ENCODE measurements at regions of chr10 and their contacts with region 1.

Region 1: DNA sequence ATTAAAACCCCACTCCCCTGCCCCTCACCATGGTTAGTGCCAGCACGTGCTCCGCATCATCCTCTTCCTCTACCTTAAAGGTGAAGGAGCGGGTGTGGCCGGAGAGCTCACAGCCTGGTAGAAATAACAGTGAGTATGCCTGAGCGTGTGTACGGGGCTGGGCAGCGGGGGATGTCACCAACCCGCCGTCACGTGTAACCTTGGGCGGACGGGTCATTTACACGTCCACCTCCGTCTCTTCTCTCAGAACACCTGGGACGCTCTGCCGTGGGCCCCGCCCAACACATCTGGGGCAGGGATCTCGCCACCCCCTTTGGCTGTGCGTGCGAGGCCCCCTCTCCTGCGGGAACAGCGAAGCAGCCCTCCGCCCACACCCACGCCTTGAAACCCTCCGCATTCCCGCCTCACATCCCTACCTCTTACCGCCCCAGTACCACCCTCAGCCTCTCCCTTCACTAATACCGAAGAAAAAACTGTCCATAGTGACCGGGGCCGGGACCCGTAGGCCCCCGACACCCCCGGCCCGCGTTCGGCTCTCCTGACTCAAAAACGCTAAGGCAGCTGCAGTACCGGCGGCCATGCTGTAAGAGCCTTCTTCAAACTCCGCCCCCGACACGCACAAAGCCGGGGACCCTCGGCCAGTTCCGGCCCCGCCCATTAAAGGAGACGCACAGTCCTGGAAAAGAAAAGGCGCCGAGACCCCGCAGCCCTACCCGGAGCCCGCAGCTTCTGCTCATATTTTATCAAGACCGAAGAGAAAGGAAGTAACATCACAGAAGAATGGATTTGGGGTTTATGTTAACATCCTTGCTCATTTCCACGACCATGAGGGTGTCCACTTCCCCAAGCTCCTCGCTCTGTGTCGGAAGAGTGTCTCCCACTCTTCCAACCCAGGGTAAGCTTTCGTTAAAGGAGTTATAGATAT is at the start of gene NPM3:
- DNase-seq: peak; percentile 93
- ATAC-seq: peak; percentile 40
- H3K4me3 Mint-ChIP-seq: peak within 1 kb of the TSS; percentile 100
- H3K27ac Mint-ChIP-seq: peak within 1 kb of the TSS; percentile 92
- H3K4me1 Mint-ChIP-seq: peaks cover 47% of the 10 kb centered on the region
- H3K27me3 Mint-ChIP-seq: peaks cover 11% of the 10 kb centered on the region
- CTCF ChIP-seq: no peak
- total RNA-seq, gene NPM3: 223 to 260 TPM (median 229 TPM) in 3 replicates

Region 2: GRCh38 chr10:100670828-100671479 is 1112.1 kb before region 1 on chr10:
- CTCF ChIA-PET with region 1: no interaction called
- POLR2A ChIA-PET with region 1: no interaction called
- DNase-seq: peak; percentile 77
- ATAC-seq: peak; percentile 67
- H3K4me3 Mint-ChIP-seq: peak overlapping the region; percentile 61
- H3K27ac Mint-ChIP-seq: no peak overlapping the region
- H3K4me1 Mint-ChIP-seq: peaks cover 28% of the 10 kb centered on the region
- H3K27me3 Mint-ChIP-seq: peaks cover 60% of the 10 kb centered on the region
- CTCF ChIP-seq: peak; percentile 92

Region 3: DNA sequence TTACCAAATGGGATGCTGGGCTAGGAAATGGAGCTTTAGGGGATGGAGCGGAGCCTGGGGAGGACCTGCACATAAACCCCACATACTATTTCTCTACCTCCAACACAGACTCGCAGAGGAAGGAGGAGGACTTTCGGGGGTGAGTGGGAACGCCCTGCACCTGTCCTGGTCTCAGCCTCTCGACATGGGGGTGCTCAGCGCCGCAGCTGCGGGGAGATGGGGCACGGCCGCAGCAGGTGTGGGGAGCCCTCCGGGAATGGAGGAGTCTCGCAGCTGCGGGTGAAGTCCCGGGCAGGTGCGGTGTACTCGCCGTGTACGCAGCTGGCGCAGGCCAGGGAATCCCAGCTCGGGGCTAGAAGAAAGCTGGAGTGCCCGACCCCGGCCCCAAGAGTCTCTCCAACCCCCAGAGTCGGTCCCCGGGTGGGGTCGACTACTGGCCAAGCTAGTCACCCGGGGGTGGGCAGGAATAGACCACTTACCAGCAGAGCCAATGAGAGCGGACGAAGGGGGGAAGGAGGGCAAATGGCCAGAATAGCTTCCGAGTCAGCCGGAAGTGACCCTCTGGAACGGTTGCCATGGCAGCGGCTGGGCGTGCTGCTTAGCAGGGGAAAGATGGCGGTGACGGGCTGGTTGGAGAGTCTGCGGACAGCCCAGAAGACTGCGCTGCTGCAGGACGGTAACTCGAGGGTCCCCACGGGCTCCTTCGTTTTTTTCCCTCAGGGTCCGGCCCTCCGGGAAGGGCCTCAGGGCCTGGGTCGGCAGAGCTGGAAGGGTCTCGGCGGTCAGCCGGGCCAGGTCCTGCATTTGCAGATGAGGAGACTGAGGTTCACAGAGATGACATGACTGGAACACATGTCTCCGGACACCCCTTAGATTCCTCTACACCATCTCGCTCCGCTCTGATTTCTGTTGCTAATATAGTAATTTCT is 195.1 kb before region 1 on chr10 and contains the starts of genes DPCD and POLL:
- CTCF ChIA-PET with region 1: interaction called, 16 read pairs
- POLR2A ChIA-PET with region 1: no interaction called
- DNase-seq: peak; percentile 96
- ATAC-seq: peak; percentile 96
- H3K4me3 Mint-ChIP-seq: peak within 1 kb of the TSS; percentile 94
- H3K27ac Mint-ChIP-seq: peak within 1 kb of the TSS; percentile 36; the same call in 1 of the 2 replicates
- H3K4me1 Mint-ChIP-seq: peaks cover 16% of the 10 kb centered on the region
- H3K27me3 Mint-ChIP-seq: no peaks in the 10 kb centered on the region
- CTCF ChIP-seq: no peak
- total RNA-seq, gene DPCD: 21.8 to 23.8 TPM (median 22.0 TPM) in 3 replicates
- total RNA-seq, gene POLL: 40.7 to 46.2 TPM (median 41.3 TPM) in 3 replicates

Region 4: DNA sequence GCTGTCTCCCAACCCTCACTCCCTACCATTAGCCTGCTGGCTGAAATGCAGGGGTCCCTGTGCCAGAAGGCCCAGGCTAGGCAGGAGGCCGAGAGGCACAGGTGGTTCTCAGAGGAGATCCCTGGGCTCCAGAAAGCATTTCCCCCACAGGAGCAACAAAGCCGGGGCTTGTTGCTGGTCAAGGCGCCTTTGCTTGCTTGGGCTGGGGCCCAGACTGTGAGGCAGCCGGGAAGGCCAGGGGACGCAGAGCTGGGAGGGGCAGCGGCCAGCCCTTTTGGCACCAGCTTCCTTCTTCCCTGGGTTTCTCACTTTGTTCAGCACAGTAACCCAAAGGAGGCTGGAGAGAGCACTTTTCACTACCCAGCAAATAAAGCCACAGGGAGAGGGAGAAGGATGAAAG is 136.7 kb before region 1 on chr10:
- CTCF ChIA-PET with region 1: interaction called, 19 read pairs
- POLR2A ChIA-PET with region 1: no interaction called
- DNase-seq: no peak
- ATAC-seq: no peak
- H3K4me3 Mint-ChIP-seq: no peak overlapping the region
- H3K27ac Mint-ChIP-seq: no peak overlapping the region
- H3K4me1 Mint-ChIP-seq: peaks cover 48% of the 10 kb centered on the region
- H3K27me3 Mint-ChIP-seq: no peaks in the 10 kb centered on the region
- CTCF ChIP-seq: no peak

Region 5: DNA sequence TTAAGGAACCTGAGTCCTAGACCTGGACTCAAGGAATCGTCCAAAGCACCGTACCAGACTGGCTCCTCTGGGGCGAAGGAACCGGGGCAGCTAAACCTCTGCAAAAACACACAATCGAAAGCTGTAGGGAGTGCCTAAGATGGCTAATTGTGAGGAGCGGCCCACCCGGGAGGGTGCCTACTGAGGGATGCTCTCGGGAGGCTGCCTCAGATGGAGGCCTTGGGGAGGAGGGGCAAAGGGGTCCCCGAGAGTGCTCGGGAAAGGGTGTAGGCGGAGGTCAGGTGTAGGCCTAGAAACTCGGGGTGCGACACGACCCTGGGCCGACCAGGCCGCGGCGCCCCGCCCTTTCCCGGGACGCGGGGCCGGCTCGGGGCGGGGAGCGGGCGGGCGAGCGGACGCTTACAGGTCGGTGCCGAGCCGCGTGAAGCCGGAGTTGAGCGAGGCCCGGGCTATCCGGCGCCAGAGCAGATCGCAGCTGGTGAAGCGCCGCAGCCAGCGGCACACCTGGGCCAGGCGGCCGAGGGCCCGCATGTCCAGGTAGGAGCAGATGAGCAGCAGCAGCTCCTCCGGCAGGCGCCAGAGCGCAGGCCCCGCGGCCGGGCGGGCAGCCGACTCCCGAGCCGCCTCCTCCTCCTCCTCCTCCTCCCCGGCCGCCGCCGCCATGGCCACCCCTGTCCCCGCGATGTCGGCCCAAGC is 88.9 kb before region 1 on chr10:
- CTCF ChIA-PET with region 1: interaction called, 10 read pairs
- POLR2A ChIA-PET with region 1: interaction called, 3 read pairs
- DNase-seq: peak; percentile 72
- ATAC-seq: peak; percentile 79
- H3K4me3 Mint-ChIP-seq: peak overlapping the region; percentile 81
- H3K27ac Mint-ChIP-seq: peak overlapping the region; percentile 95
- H3K4me1 Mint-ChIP-seq: peaks cover 43% of the 10 kb centered on the region
- H3K27me3 Mint-ChIP-seq: no peaks in the 10 kb centered on the region
- CTCF ChIP-seq: no peak

Region 6: GRCh38 chr10:101749047-101750016 is 33.7 kb before region 1 on chr10:
- CTCF ChIA-PET with region 1: interaction called, 32 read pairs
- POLR2A ChIA-PET with region 1: no interaction called
- DNase-seq: peak; percentile 57
- ATAC-seq: peak; percentile 98
- H3K4me3 Mint-ChIP-seq: no peak overlapping the region
- H3K27ac Mint-ChIP-seq: peak overlapping the region; percentile 61
- H3K4me1 Mint-ChIP-seq: peaks cover 13% of the 10 kb centered on the region
- H3K27me3 Mint-ChIP-seq: peaks cover 7% of the 10 kb centered on the region
- CTCF ChIP-seq: no peak

Region 7: GRCh38 chr10:101818119-101818871 is 35.2 kb after region 1 on chr10 and contains the start of gene OGA:
- CTCF ChIA-PET with region 1: interaction called, 24 read pairs
- POLR2A ChIA-PET with region 1: interaction called, 14 read pairs
- DNase-seq: peak; percentile 98
- ATAC-seq: peak; percentile 91
- H3K4me3 Mint-ChIP-seq: peak within 1 kb of the TSS; percentile 88
- H3K27ac Mint-ChIP-seq: peak within 1 kb of the TSS; percentile 98
- H3K4me1 Mint-ChIP-seq: peaks cover 26% of the 10 kb centered on the region
- H3K27me3 Mint-ChIP-seq: no peaks in the 10 kb centered on the region
- CTCF ChIP-seq: no peak
- total RNA-seq, gene OGA: 110 to 111 TPM (median 110 TPM) in 3 replicates